HepG2 (cell line): ENCODE measurements at regions of chr6 and their contacts with region 1.

Region 1: GRCh38 chr6:148342357-148343046 is at the start of gene SASH1:
- DNase-seq: peak; percentile 96
- ATAC-seq: peak; percentile 90
- H3K4me3 ChIP-seq: peak within 1 kb of the TSS; percentile 62 to 93 (median 82)
- H3K27ac ChIP-seq: peak within 1 kb of the TSS; percentile 95
- H3K4me1 ChIP-seq: peaks cover 53% of the 10 kb centered on the region
- H3K27me3 ChIP-seq: no peaks in the 10 kb centered on the region; a peak in 1 of 5 replicates
- CTCF ChIP-seq: no peak
- EP300 ChIP-seq: peak in 1 of 2 experiments; percentile 47; a peak in 1 of 4 replicates
- POLR2A ChIP-seq: peak; percentile 56 to 83
- RAD21 ChIP-seq: peak; percentile 8; the same call in 1 of the 2 replicates
- total RNA-seq, gene SASH1: 8.2 and 8.9 TPM in 2 replicates

Region 2: DNA sequence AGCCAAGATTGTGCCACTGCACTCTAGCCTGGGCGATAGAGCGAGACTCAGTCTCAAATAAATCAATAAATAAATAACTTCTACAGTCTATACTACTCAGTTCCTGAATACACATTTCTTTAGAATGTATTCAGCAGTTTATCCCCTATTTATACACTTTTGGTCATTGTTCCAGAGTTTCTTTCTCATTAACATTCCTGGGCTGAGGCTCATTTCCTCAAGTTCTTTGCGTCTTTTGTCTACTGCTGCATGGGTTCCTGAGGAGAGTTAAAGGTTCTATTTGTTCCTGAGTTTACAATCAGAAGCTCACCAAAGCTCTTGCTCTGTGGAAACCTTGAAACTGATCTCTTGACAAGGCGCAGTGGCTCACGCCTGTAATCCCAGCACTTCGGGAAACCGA is 37.5 kb before region 1 on chr6:
- CTCF ChIA-PET with region 1: no interaction called
- POLR2A ChIA-PET with region 1: no interaction called
- in situ Hi-C with region 1: no loop called
- intact Hi-C with region 1: loop called (anchors 5 kb)
- DNase-seq: no peak
- ATAC-seq: no peak
- H3K4me3 ChIP-seq: no peak overlapping the region
- H3K27ac ChIP-seq: no peak overlapping the region
- H3K4me1 ChIP-seq: peaks cover 13% of the 10 kb centered on the region
- H3K27me3 ChIP-seq: 0 out of 5 replicates have a peak, but pooled peaks cover 0 to 2% of the 10 kb centered on the region in 2 experiments
- CTCF ChIP-seq: no peak
- EP300 ChIP-seq: no peak
- POLR2A ChIP-seq: no peak
- RAD21 ChIP-seq: no peak

Region 3: DNA sequence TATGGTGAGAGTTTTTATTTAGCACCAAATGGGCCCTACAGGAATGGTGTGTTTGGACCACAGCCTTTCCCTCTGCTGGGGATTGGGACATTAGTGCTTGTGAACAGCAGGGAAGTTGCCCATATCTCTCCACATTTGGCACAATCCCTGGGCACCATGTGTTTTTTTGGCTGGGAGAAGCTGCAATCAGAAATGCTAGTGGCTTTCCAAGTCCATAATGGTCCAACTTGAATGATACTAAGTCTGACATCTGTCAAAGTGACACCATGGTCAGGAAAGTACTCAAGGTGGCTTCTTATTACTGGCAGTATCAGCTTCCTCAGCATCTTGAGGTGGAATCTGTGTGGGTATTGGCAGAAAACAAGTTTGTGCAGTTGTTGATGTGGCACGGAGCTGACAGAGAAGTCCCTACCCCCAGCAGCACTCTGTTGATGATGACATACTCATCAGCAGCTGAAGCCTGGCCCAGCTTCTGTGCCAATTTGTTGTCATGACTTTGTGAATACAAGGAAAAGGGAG is 53.1 kb after region 1 on chr6:
- CTCF ChIA-PET with region 1: no interaction called
- POLR2A ChIA-PET with region 1: no interaction called
- in situ Hi-C with region 1: no loop called
- intact Hi-C with region 1: loop called (anchors 5 kb)
- DNase-seq: no peak
- ATAC-seq: no peak
- H3K4me3 ChIP-seq: no peak overlapping the region
- H3K27ac ChIP-seq: no peak overlapping the region
- H3K4me1 ChIP-seq: no peaks in the 10 kb centered on the region
- H3K27me3 ChIP-seq: no peaks in the 10 kb centered on the region
- CTCF ChIP-seq: no peak
- EP300 ChIP-seq: no peak
- POLR2A ChIP-seq: no peak
- RAD21 ChIP-seq: no peak